ENCODE measurements at regions of chr16 and their contacts with region 1.

Region 1: GRCh38 chr16:425082-425718 is at the start of gene RAB11FIP3:
- DNase-seq: peak; percentile 80
- ATAC-seq: peak; percentile 82
- H3K4me3 Mint-ChIP-seq: peak within 1 kb of the TSS; percentile 67
- H3K27ac Mint-ChIP-seq: no peak within 1 kb of the TSS
- H3K4me1 Mint-ChIP-seq: peaks cover 14% of the 10 kb centered on the region
- H3K27me3 Mint-ChIP-seq: peaks cover 54% of the 10 kb centered on the region
- CTCF ChIP-seq: no peak
- total RNA-seq, gene RAB11FIP3: 37.1 to 38.6 TPM (median 37.9 TPM) in 3 replicates

Region 2: DNA sequence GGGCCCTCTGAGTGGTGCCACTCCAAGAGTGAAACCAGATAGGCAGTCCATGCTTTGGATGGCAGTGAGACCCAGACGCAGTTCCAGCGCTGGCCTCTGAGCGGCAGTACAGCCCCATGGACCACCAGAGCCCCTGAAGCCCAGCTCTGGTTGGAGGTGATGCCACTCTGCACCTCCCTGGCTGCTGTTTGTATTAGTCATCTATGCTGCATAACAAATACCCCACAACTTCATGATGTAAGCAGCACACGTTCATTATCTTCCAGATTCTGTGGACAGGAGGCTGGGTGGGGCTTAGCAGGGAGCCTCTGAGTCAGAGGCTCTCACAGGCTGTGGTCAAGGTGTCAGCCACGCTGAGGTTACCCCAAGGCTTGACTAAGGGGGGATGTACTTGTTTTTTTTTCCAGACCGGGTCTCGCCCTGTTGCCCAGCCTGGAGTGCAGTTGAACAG is 33.3 kb before region 1 on chr16:
- CTCF ChIA-PET with region 1: interaction called, 10 read pairs
- POLR2A ChIA-PET with region 1: no interaction called
- DNase-seq: peak; percentile 88
- ATAC-seq: peak; percentile 85
- H3K4me3 Mint-ChIP-seq: no peak overlapping the region
- H3K27ac Mint-ChIP-seq: no peak overlapping the region
- H3K4me1 Mint-ChIP-seq: peaks cover 27% of the 10 kb centered on the region
- H3K27me3 Mint-ChIP-seq: peaks cover 3% of the 10 kb centered on the region; the same call in 1 of the 2 replicates
- CTCF ChIP-seq: peak; percentile 97

Measured in WTC11 (cell line).